Vagina (tissue), 2 donors: ENCODE measurements at regions of chr14 and their contacts with region 1.

Region 1: GRCh38 chr14:76784266-76785264 is 23.3 kb downstream of the VASH1 start:
- DNase-seq: peak; percentile 77 to 82
- H3K4me3 ChIP-seq: no peak overlapping the region
- H3K27ac ChIP-seq: no peak overlapping the region
- H3K4me1 ChIP-seq: peaks cover 20% of the 10 kb centered on the region
- H3K27me3 ChIP-seq: no peaks in the 10 kb centered on the region
- CTCF ChIP-seq: peak; percentile 55 to 77 (median 66)
- POLR2A ChIP-seq: no peak

Region 2: GRCh38 chr14:76710056-76711010 is 74.2 kb before region 1 on chr14:
- intact Hi-C with region 1: loop called (anchors 5 kb)
- DNase-seq: peak in 1 of 2 donors; percentile 62
- H3K4me3 ChIP-seq: no peak overlapping the region
- H3K27ac ChIP-seq: no peak overlapping the region
- H3K4me1 ChIP-seq: peaks cover 2% of the 10 kb centered on the region
- H3K27me3 ChIP-seq: no peaks in the 10 kb centered on the region
- CTCF ChIP-seq: peak; percentile 66 to 82 (median 69)
- POLR2A ChIP-seq: no peak

Region 3: DNA sequence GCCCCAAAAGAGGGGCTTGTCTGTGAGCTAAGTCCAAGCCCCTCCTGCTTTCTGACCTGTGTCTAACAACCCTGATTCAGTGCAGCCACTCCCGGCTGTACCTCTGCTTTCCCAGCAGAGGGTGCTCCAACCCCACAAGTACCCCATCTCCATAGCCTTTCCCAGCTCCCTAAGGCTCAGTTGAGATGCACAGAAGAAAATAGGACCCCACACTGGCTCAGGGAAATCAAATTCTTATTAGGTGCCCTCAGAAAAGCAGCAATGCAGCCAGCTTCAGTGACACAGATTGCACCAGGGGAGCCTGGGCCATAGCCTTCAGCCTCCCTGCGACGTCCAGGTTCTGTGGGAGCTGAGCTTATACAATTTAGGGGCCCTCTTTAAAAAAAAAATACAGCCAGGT is 91.5 kb after region 1 on chr14:
- intact Hi-C with region 1: no loop called
- DNase-seq: no peak
- H3K4me3 ChIP-seq: no peak overlapping the region
- H3K27ac ChIP-seq: no peak overlapping the region
- H3K4me1 ChIP-seq: no peaks in the 10 kb centered on the region
- H3K27me3 ChIP-seq: no peaks in the 10 kb centered on the region
- CTCF ChIP-seq: peak; percentile 89 to 92 (median 90)
- POLR2A ChIP-seq: no peak